ENCODE measurements at regions of chr3 and their contacts with region 1.

Region 1: DNA sequence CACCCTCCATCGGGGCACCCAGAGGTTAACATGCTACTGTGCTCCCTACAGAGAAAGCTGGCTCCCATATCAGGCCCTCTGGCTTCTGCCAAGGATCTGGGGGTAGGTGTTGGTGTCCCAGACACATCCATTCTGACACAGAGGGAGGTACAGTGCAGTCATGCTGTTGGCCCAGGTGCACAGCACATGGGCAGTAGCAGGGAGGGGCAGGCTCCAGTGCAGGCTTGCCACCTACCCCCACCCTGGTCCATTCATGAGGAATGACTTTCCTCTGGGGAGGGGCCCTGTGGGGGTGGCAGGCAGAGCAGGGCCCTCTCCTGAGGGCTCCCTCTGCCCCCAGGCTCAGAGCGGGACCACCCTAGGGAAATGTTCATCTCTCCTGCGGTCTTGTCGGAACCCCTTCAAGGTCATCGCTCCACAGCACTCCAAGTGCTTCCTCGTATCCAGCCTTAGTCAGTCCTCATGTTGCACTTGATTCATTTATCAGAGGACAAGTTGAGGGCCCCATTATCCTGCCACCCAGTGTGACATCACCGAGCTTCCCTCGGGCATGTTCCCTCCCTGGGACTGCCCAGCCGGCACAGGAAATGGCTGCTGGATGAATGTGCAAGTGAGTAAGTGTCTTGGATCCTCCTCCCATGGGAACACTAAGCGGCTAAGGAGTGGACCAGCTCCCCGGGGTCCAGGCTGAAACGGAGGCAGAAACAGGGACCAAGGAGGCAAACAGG is 10.0 kb downstream of the DUSP7 start:
- DNase-seq: peak; percentile 91 to 94
- ATAC-seq: peak; percentile 75
- H3K4me3 ChIP-seq: no peak overlapping the region
- H3K27ac ChIP-seq: peak overlapping the region; percentile 64 to 90
- H3K4me1 ChIP-seq: no peaks in the 10 kb centered on the region
- H3K27me3 ChIP-seq: no peaks in the 10 kb centered on the region

Region 2: DNA sequence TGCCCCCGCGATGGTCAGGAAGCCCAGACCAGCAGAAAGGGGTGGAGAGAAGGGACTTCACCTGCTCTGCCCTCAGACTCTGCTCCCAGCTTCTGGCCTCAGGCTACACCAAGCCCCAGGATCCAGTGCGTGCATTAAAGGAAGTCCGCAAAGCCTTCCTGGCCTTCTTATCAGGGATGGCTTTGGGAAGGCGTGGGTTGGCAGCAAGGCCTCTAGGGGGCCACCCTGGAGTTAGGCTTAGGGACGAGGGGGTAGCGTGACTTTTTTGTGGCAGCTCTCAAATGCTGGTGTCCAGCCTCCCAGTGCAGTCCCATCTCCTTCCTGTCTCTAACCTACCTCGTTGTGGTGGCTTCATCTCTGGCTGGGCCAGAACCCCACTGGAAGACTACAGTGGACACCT is 31.7 kb before region 1 on chr3:
- intact Hi-C with region 1: loop called (anchors 2 to 5 kb)
- DNase-seq: no peak
- ATAC-seq: no peak
- H3K4me3 ChIP-seq: no peak overlapping the region
- H3K27ac ChIP-seq: no peak overlapping the region
- H3K4me1 ChIP-seq: no peaks in the 10 kb centered on the region
- H3K27me3 ChIP-seq: no peaks in the 10 kb centered on the region

Region 3: GRCh38 chr3:52090131-52090932 is 44.0 kb after region 1 on chr3:
- intact Hi-C with region 1: loop called in 1 of 2 experiments (anchors 2 kb)
- DNase-seq: peak; percentile 84 to 88
- ATAC-seq: peak; percentile 79
- H3K4me3 ChIP-seq: no peak overlapping the region
- H3K27ac ChIP-seq: peak overlapping the region; percentile 96 to 100
- H3K4me1 ChIP-seq: peaks cover 0 to 3% of the 10 kb centered on the region in 2 donors
- H3K27me3 ChIP-seq: no peaks in the 10 kb centered on the region